MCF 10A (cell line): ENCODE measurements at regions of chr15 and their contacts with region 1.

Region 1: GRCh38 chr15:43185157-43186017 is at the start of gene CCNDBP1:
- DNase-seq: peak; percentile 88
- H3K4me3 Mint-ChIP-seq: peak within 1 kb of the TSS; percentile 93
- H3K27ac Mint-ChIP-seq: peak within 1 kb of the TSS; percentile 93
- H3K4me1 Mint-ChIP-seq: peaks cover 10% of the 10 kb centered on the region
- H3K27me3 Mint-ChIP-seq: no peaks in the 10 kb centered on the region
- CTCF ChIP-seq: peak; percentile 30
- total RNA-seq, gene CCNDBP1: 45.5 and 50.4 TPM in 2 replicates

Region 2: DNA sequence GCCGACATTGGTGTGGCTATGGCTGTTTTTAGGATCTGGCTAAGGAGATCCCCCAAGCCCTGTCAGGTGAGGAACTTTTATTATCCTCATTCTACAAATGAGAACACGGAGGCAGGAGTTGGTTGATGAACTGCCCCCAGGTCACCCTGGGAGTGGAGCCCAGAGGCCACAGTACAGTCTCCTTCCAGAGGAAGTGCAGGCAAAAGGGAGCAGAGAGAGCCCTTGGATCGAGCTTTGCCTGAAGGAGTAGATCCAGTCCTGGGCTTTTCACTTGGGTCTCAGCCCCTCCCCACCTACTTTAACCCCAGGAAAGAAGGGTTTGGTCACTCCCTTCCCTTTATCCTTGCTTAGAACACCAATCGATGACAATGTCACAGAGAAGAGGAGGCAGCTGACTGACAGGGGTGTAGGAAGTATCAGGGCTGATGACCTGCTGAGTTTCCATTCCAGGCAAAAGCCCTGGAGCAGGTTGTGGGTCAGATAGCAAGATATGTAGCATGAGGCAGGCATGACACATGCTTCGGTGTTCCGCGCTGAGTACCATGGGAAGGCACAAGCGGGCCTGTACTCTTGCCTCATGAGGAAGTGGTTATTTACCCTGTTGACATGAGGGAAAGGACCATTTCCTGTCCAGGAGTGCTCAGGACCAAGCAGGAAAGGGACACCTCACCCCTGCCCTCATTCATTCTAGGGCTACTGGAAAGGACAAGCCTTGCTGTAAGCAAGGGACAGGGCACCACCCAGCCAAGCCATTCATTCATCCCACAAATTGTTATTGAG is 1085.2 kb before region 1 on chr15:
- CTCF ChIA-PET with region 1: no interaction called
- POLR2A ChIA-PET with region 1: no interaction called
- intact Hi-C with region 1: no loop called
- DNase-seq: peak; percentile 13
- H3K4me3 Mint-ChIP-seq: no peak overlapping the region
- H3K27ac Mint-ChIP-seq: no peak overlapping the region
- H3K4me1 Mint-ChIP-seq: peaks cover 6% of the 10 kb centered on the region
- H3K27me3 Mint-ChIP-seq: no peaks in the 10 kb centered on the region
- CTCF ChIP-seq: no peak

Region 3: GRCh38 chr15:42994546-42994945 is 190.8 kb before region 1 on chr15:
- CTCF ChIA-PET with region 1: no interaction called
- POLR2A ChIA-PET with region 1: no interaction called
- intact Hi-C with region 1: no loop called
- DNase-seq: no peak
- H3K4me3 Mint-ChIP-seq: no peak overlapping the region
- H3K27ac Mint-ChIP-seq: no peak overlapping the region
- H3K4me1 Mint-ChIP-seq: peaks cover 6% of the 10 kb centered on the region
- H3K27me3 Mint-ChIP-seq: no peaks in the 10 kb centered on the region
- CTCF ChIP-seq: no peak

Region 4: GRCh38 chr15:43105778-43106485 is 79.5 kb before region 1 on chr15 and contains the start of gene UBR1:
- CTCF ChIA-PET with region 1: interaction called, 3 read pairs
- POLR2A ChIA-PET with region 1: interaction called, 16 read pairs
- intact Hi-C with region 1: loop called (anchors 2 kb)
- DNase-seq: peak; percentile 87
- H3K4me3 Mint-ChIP-seq: peak within 1 kb of the TSS; percentile 82
- H3K27ac Mint-ChIP-seq: peak within 1 kb of the TSS; percentile 97
- H3K4me1 Mint-ChIP-seq: peaks cover 37% of the 10 kb centered on the region
- H3K27me3 Mint-ChIP-seq: no peaks in the 10 kb centered on the region
- CTCF ChIP-seq: no peak
- total RNA-seq, gene UBR1: 25.6 and 32.6 TPM in 2 replicates

Region 5: GRCh38 chr15:43118829-43119228 is 66.6 kb before region 1 on chr15:
- CTCF ChIA-PET with region 1: no interaction called
- POLR2A ChIA-PET with region 1: no interaction called
- intact Hi-C with region 1: no loop called
- DNase-seq: no peak
- H3K4me3 Mint-ChIP-seq: no peak overlapping the region
- H3K27ac Mint-ChIP-seq: no peak overlapping the region
- H3K4me1 Mint-ChIP-seq: peaks cover 11% of the 10 kb centered on the region
- H3K27me3 Mint-ChIP-seq: peaks cover 35% of the 10 kb centered on the region
- CTCF ChIP-seq: no peak

Region 6: GRCh38 chr15:43168192-43169107 is 16.9 kb before region 1 on chr15:
- CTCF ChIA-PET with region 1: interaction called, 3 read pairs
- POLR2A ChIA-PET with region 1: interaction called, 26 read pairs
- intact Hi-C with region 1: no loop called
- DNase-seq: peak; percentile 96
- H3K4me3 Mint-ChIP-seq: peak overlapping the region; percentile 49
- H3K27ac Mint-ChIP-seq: peak overlapping the region; percentile 85
- H3K4me1 Mint-ChIP-seq: peaks cover 21% of the 10 kb centered on the region
- H3K27me3 Mint-ChIP-seq: no peaks in the 10 kb centered on the region
- CTCF ChIP-seq: no peak

Region 7: GRCh38 chr15:43218908-43219706 is 33.7 kb after region 1 on chr15:
- CTCF ChIA-PET with region 1: interaction called, 5 read pairs
- POLR2A ChIA-PET with region 1: interaction called, 10 read pairs
- intact Hi-C with region 1: no loop called
- DNase-seq: peak; percentile 88
- H3K4me3 Mint-ChIP-seq: no peak overlapping the region
- H3K27ac Mint-ChIP-seq: peak overlapping the region; percentile 46
- H3K4me1 Mint-ChIP-seq: peaks cover 6% of the 10 kb centered on the region
- H3K27me3 Mint-ChIP-seq: no peaks in the 10 kb centered on the region
- CTCF ChIP-seq: peak; percentile 35